Breast epithelium (tissue), 4 donors: ENCODE measurements at regions of chr22 and their contacts with region 1.

Region 1: GRCh38 chr22:33983558-33983957 is 63.3 kb upstream of the LARGE1 start:
- DNase-seq: no peak
- H3K4me3 ChIP-seq: no peak overlapping the region
- H3K27ac ChIP-seq: no peak overlapping the region
- H3K4me1 ChIP-seq: no peaks in the 10 kb centered on the region
- H3K27me3 ChIP-seq: no peaks in the 10 kb centered on the region
- CTCF ChIP-seq: no peak
- POLR2A ChIP-seq: no peak

Region 2: DNA sequence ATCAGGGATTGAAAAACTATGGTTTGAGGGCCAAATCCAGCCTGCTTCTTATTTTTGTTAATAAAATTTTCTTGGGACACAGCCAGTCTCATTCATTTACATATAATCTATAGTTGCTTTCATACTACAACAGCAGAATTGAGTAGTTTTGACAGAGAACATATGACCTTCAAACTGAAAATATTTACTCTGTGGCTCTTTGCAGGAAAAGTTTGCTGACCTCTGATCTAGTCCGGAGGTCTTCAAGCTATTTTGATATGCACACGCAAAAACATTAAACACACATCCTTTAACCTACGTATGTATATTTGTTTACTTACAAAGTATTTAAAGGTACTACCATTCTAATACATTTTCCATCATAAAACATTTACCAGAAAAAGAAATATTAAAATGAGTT is 13.3 kb after region 1 on chr22:
- intact Hi-C with region 1: loop called (anchors 2 kb)
- DNase-seq: no peak
- H3K4me3 ChIP-seq: no peak overlapping the region
- H3K27ac ChIP-seq: no peak overlapping the region
- H3K4me1 ChIP-seq: no peaks in the 10 kb centered on the region
- H3K27me3 ChIP-seq: no peaks in the 10 kb centered on the region
- CTCF ChIP-seq: no peak
- POLR2A ChIP-seq: no peak